Natural killer cell (primary cell): ENCODE measurements at regions of chr14 and their contacts with region 1.

Region 1: DNA sequence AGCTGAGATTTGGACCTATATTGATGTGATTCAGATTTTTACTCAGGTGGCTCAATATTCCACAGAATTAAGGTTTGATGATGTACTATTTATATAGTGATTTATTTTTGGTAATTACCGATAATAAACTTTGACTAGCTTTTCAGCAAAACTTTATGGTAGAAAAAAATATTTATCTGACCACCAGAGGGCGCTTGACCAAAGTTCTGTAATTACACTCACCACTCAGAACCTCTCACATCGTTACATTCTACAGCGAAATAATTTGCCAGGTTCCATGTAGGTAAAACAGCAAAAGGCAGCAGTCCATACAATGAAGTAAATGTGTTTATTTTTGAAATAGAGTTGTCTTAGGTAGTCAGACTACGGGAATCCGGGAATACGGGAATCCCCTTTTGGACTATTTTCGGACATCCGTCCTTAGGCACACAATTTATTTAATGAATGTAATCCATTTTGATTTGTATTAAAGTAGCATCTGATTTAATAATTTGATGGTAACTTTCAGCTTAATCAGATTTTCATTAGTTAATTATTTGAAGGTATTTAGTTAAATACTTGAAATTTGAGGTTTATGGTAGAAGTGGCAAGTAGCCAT is 143.0 kb upstream of the DDHD1 start:
- DNase-seq: peak in 1 of 2 donors; percentile 68
- ATAC-seq: peak in 1 of 3 donors; percentile 53
- H3K4me3 ChIP-seq: no peak overlapping the region
- H3K4me3 Mint-ChIP-seq: no peak overlapping the region
- H3K27ac ChIP-seq: no peak overlapping the region
- H3K27ac Mint-ChIP-seq: no peak overlapping the region
- H3K4me1 ChIP-seq: no peaks in the 10 kb centered on the region
- H3K4me1 Mint-ChIP-seq: no peaks in the 10 kb centered on the region
- H3K27me3 ChIP-seq: no peaks in the 10 kb centered on the region
- H3K27me3 Mint-ChIP-seq: no peaks in the 10 kb centered on the region
- CTCF ChIP-seq: peak; percentile 90

Region 2: DNA sequence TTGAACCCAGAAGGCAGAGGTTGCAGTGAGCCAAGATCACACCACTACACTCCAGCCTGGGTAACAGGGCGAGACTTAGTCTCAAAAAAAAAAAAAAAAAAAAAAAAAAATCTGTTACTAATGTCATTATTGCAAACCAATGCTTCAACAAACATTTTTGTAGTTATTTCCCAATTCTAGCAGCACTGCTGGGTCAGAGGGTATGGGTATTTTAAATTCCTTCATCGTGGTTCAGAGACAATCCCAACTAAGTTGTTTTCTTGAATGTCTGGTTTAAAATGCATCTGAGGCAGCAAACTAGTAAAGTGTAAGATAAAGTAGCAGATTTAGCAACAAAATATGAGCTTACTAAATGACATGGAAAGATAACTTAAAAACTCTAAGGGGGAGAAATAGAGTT is 410.9 kb before region 1 on chr14:
- intact Hi-C with region 1: no loop called
- DNase-seq: no peak
- ATAC-seq: no peak
- H3K4me3 ChIP-seq: no peak overlapping the region
- H3K4me3 Mint-ChIP-seq: no peak overlapping the region
- H3K27ac ChIP-seq: no peak overlapping the region
- H3K27ac Mint-ChIP-seq: no peak overlapping the region
- H3K4me1 ChIP-seq: no peaks in the 10 kb centered on the region
- H3K4me1 Mint-ChIP-seq: no peaks in the 10 kb centered on the region
- H3K27me3 ChIP-seq: no peaks in the 10 kb centered on the region
- H3K27me3 Mint-ChIP-seq: no peaks in the 10 kb centered on the region
- CTCF ChIP-seq: no peak

Region 3: DNA sequence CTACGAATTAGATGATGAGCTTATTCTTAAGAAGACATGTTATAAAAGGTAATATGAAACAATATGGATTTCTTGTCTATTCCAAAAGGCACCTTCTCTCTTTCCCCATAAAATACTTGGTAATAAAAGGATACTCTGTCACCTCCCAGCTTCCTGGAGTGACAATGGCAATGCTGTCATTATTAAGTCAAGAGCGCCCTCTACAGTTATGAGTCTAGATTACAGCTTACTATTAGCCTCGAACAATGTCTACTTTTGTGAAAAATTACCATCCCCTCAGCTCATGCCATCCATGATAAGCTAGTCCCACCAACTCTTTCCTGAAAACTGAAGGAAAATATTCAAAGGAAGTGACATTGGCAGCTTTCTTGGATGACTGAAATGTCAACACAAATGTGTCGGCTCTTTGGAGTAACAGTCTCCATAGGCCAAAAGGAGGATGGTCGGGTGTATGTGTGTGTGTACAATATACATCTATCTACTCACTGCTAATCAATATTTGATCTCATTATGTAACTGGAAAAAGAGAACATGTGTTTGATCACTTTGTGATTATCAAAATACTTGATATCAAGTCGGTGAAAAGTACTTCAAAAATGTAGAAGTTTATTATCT is 1052.0 kb after region 1 on chr14:
- intact Hi-C with region 1: loop called (anchors 10 kb)
- DNase-seq: peak in 1 of 2 donors; percentile 40
- ATAC-seq: peak in 1 of 3 donors; percentile 45
- H3K4me3 ChIP-seq: no peak overlapping the region
- H3K4me3 Mint-ChIP-seq: no peak overlapping the region
- H3K27ac ChIP-seq: no peak overlapping the region
- H3K27ac Mint-ChIP-seq: no peak overlapping the region
- H3K4me1 ChIP-seq: no peaks in the 10 kb centered on the region
- H3K4me1 Mint-ChIP-seq: peaks cover 0 to 4% of the 10 kb centered on the region in 2 donors
- H3K27me3 ChIP-seq: no peaks in the 10 kb centered on the region
- H3K27me3 Mint-ChIP-seq: peaks cover 5 to 14% of the 10 kb centered on the region in 2 donors
- CTCF ChIP-seq: peak; percentile 29